B cell (primary cell): ENCODE measurements at regions of chr4 and their contacts with region 1.

Region 1: GRCh38 chr4:105146276-105147015 is at the start of gene TET2:
- DNase-seq: peak; percentile 90
- ATAC-seq: peak; percentile 86
- H3K4me3 ChIP-seq: peak within 1 kb of the TSS; percentile 81 to 95 (median 92)
- H3K4me3 Mint-ChIP-seq: peak within 1 kb of the TSS; percentile 97
- H3K27ac ChIP-seq: peak within 1 kb of the TSS; percentile 87 to 89
- H3K27ac Mint-ChIP-seq: peak within 1 kb of the TSS; percentile 98
- H3K4me1 ChIP-seq: peaks cover 14 to 17% of the 10 kb centered on the region in 2 donors
- H3K4me1 Mint-ChIP-seq: peaks cover 39% of the 10 kb centered on the region
- H3K27me3 ChIP-seq: no peaks in the 10 kb centered on the region
- H3K27me3 Mint-ChIP-seq: no peaks in the 10 kb centered on the region
- CTCF ChIP-seq: no peak
- total RNA-seq, gene TET2: 51.1 and 56.8 TPM in 2 replicates

Region 2: DNA sequence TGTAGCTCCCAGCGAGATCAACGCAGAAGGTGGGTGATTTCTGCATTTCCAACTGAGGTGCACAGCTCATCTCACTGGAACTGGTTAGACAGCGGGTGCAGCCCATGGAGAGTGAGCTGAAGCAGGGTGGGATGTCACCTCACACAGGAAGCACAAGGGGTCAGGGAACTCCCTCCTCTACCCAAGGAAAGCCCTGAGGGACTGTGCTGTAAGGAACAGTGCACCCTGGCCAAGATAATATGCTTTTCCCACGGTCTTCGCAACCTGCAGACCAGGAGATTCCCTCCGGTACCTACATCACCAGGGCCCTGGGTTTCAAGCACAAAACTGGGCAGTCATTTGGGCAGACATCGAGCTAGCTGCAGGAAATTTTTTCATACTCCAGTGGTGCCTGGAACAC is 216.1 kb before region 1 on chr4:
- CTCF ChIA-PET with region 1: no interaction called
- POLR2A ChIA-PET with region 1: no interaction called
- intact Hi-C with region 1: loop called (anchors 10 kb)
- DNase-seq: peak; percentile 5
- ATAC-seq: no peak
- H3K4me3 ChIP-seq: peak overlapping the region in 1 of 5 experiments; percentile 6
- H3K4me3 Mint-ChIP-seq: peak overlapping the region; percentile 37
- H3K27ac ChIP-seq: no peak overlapping the region
- H3K27ac Mint-ChIP-seq: peak overlapping the region; percentile 69
- H3K4me1 ChIP-seq: peaks cover 13 to 20% of the 10 kb centered on the region in 2 donors
- H3K4me1 Mint-ChIP-seq: peaks cover 23% of the 10 kb centered on the region
- H3K27me3 ChIP-seq: no peaks in the 10 kb centered on the region
- H3K27me3 Mint-ChIP-seq: no peaks in the 10 kb centered on the region
- CTCF ChIP-seq: no peak

Region 3: DNA sequence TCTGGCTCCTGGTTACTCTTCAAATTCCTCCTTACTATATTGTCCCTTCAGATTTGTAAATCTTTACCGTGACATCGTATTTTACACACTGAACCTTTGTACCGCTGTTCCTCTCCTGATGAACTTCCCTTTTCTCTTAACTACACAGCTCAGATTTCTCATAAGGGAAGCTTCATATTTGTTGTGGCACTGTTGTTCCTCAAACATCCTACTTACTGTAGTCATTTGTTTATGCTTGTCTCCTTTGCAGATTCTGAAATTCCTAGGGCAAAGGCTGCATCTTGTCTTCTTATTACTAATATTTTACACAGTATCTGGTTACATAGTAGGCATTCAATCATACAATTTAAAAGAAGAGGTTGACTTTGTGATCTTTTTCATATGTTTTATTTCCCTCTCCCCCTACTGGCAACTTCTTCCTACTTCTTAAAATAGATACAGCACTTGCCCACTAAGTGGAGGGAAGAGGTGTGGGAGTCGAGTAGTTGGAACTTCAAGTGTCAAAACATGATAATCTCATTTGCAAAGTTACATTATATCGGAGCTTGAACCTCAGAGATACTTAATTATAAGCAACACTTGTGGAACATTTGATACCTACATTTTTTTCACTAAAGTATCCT is 50.2 kb after region 1 on chr4:
- CTCF ChIA-PET with region 1: no interaction called
- POLR2A ChIA-PET with region 1: no interaction called
- intact Hi-C with region 1: loop called (anchors 1 kb)
- DNase-seq: peak; percentile 56
- ATAC-seq: peak; percentile 68
- H3K4me3 ChIP-seq: peak overlapping the region in 3 of 5 experiments; percentile 12 to 21 (median 13)
- H3K4me3 Mint-ChIP-seq: peak overlapping the region; percentile 70
- H3K27ac ChIP-seq: peak overlapping the region in 1 of 2 donors; percentile 74
- H3K27ac Mint-ChIP-seq: peak overlapping the region; percentile 38
- H3K4me1 ChIP-seq: peaks cover 17 to 23% of the 10 kb centered on the region in 2 donors
- H3K4me1 Mint-ChIP-seq: peaks cover 48% of the 10 kb centered on the region
- H3K27me3 ChIP-seq: no peaks in the 10 kb centered on the region
- H3K27me3 Mint-ChIP-seq: no peaks in the 10 kb centered on the region
- CTCF ChIP-seq: peak; percentile 34

Region 4: DNA sequence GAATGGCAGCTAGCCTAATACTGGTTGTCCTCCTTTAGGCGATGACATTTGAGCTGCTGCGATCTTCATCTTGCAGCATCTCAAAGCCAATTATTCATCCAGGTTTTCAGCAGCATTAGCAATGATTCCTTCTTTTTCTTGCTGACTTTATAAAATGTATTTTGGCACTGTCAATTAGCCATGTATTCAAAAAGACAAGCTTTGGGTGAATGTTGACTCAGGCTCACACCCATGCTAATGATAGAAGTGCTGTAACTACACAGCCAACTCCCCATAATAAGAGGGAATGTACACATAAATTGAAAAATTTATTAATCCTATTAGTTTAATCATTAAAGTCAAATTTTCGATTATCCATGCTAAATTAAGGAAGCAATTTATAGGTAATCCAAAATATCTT is 724.5 kb after region 1 on chr4:
- CTCF ChIA-PET with region 1: no interaction called
- POLR2A ChIA-PET with region 1: no interaction called
- intact Hi-C with region 1: no loop called
- DNase-seq: no peak
- ATAC-seq: no peak
- H3K4me3 ChIP-seq: no peak overlapping the region
- H3K4me3 Mint-ChIP-seq: no peak overlapping the region
- H3K27ac ChIP-seq: no peak overlapping the region
- H3K27ac Mint-ChIP-seq: no peak overlapping the region
- H3K4me1 ChIP-seq: no peaks in the 10 kb centered on the region
- H3K4me1 Mint-ChIP-seq: peaks cover 4% of the 10 kb centered on the region
- H3K27me3 ChIP-seq: no peaks in the 10 kb centered on the region
- H3K27me3 Mint-ChIP-seq: no peaks in the 10 kb centered on the region
- CTCF ChIP-seq: no peak